RWPE1 (cell line): ENCODE measurements at regions of chr3 and their contacts with region 1.

Region 1: DNA sequence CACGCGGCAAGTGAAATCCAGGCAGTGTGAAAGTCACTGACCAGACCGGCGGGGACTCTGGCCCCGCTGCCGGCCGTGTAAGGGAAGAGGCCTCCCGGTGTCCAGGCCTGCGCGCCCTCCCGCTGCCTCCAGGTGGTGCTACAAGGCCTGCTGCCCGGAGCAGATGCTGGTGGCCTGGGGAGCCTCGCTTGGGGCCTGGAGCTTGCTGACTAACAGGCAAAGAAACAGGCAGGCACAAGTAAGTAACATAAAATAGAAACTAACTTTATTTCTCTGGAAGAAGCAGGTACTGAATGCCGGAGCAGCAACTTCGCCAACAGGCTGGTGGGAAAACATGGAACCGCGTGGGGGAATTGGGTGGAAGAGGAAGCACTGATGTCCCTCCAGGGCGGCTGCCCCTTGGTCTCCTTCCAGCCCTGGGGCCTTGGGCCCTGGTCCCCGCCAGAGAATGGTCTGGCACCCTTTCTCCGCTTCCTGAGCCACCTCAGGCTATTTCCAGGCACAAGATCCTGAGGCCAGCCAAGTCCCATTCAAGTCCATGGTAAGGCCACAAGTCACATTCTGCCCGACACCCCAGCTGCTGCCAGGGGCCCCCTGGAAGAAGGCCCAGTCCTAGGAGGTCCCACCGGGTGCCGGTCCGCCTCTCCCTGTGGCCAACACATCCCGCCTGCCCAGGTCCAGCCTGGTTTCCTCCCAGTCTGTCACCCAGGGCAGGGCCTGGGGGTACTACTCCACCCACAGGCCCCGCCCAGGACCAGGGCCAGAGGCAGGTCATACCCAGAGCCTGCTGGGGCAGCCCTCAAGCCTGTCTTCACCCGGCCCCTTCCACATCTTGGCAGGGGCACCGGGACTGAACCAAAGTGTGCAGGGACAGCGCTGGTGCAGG is 45.0 kb downstream of the TNK2 start:
- DNase-seq: peak; percentile 77
- H3K27ac ChIP-seq: peak overlapping the region; percentile 98
- CTCF ChIP-seq: peak; percentile 98

Region 2: DNA sequence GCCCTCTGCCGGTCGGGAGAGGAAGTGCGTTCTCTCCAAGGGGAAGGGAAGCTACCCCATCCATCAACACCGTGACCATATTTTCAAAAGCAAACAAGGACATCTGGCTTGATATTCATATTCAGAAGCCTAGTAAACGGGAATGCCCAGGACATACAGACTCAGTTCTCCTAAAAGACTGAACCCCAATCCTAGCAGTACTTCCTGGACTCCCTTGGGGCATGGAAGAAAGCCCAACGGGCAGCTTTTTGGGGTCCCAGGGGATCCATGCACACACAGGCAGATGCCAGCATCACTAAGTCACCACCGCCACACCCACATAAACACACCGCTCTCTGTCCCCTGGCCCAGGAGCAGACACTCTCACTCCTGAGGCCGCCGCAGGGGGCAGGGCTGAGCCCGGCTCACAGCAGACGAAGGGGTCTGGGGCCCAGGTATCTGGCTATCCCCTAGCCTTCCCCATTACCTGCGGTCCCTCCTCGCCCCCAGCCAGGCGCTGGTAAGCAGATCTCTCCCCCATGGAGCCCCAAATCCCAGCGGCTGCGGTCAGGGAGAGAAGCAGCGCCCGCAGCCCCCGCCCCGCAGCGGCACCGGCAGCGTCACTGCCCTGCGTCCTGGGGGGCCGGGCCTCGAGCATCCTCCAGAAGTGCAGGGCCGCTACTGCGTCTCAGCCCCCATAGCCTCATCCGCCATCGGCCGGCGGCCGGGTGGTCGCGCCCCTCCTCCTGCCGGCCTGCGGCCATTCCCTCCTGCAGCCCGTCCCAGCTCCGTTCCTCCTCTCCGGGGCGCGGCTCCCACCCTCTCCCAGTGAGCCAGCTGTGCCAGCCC is 31.6 kb after region 1 on chr3:
- CTCF ChIA-PET with region 1: interaction called, 74 read pairs
- POLR2A ChIA-PET with region 1: interaction called, 4 read pairs
- DNase-seq: peak; percentile 75
- H3K27ac ChIP-seq: peak overlapping the region; percentile 100
- CTCF ChIP-seq: peak; percentile 94

Region 3: GRCh38 chr3:197137751-197138150 is 1274.4 kb after region 1 on chr3:
- CTCF ChIA-PET with region 1: interaction called, 10 read pairs
- POLR2A ChIA-PET with region 1: no interaction called
- DNase-seq: no peak
- H3K27ac ChIP-seq: no peak overlapping the region
- CTCF ChIP-seq: no peak